Left cardiac atrium (tissue), 4 donors: ENCODE measurements at regions of chr7 and their contacts with region 1.

Region 1: DNA sequence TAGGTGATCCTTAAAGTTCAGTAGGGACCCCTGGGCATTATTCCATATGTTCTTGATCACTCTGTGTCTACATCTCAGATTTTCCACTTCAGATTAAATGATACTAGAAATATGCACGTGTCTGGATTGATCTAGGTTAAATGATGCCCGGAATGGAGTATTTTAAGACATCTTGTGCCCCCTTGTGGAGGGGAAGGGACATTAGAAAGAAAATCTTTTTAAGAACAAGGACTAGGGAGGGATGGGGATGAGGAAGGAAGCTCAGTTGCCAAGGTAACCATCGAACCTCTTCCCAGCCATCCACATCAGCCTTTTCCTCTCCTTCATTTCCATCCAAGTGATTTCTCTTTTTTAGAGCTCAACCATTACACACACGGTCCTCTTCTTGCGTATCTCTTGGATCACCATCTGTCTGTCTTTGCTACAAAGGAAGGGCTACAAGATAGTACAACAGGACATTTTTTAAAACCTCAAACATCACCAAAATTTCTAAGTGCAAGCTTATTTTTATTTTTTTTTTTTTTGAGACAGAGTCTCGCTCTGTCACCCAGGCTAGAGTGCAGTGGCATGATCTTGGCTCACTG is 40.5 kb downstream of the PRSS2 start:
- DNase-seq: no peak
- ATAC-seq: peak in 1 of 2 donors; percentile 36

Region 2: GRCh38 chr7:142632291-142633134 is 178.7 kb before region 1 on chr7:
- intact Hi-C with region 1: loop called in 1 of 2 experiments (anchors 10 kb)
- DNase-seq: peak; percentile 44
- ATAC-seq: peak; percentile 50 to 76